ENCODE measurements at regions of chr2 and their contacts with region 1.

Region 1: GRCh38 chr2:208006833-208007232 is 18.5 kb downstream of the PLEKHM3 start:
- DNase-seq: no peak
- ATAC-seq: no peak
- H3K4me3 ChIP-seq: no peak overlapping the region
- H3K4me3 Mint-ChIP-seq: no peak overlapping the region
- H3K27ac ChIP-seq: no peak overlapping the region
- H3K27ac Mint-ChIP-seq: no peak overlapping the region
- H3K4me1 ChIP-seq: peaks cover 0 to 5% of the 10 kb centered on the region in 2 donors
- H3K4me1 Mint-ChIP-seq: peaks cover 16% of the 10 kb centered on the region
- H3K27me3 ChIP-seq: no peaks in the 10 kb centered on the region
- H3K27me3 Mint-ChIP-seq: no peaks in the 10 kb centered on the region
- CTCF ChIP-seq: no peak

Region 2: GRCh38 chr2:208033758-208034502 is 27.1 kb after region 1 on chr2:
- CTCF ChIA-PET with region 1: interaction called, 6 read pairs
- POLR2A ChIA-PET with region 1: interaction called, 13 read pairs
- intact Hi-C with region 1: no loop called
- DNase-seq: peak; percentile 60
- ATAC-seq: peak; percentile 68
- H3K4me3 ChIP-seq: no peak overlapping the region
- H3K4me3 Mint-ChIP-seq: no peak overlapping the region
- H3K27ac ChIP-seq: no peak overlapping the region
- H3K27ac Mint-ChIP-seq: no peak overlapping the region
- H3K4me1 ChIP-seq: no peaks in the 10 kb centered on the region
- H3K4me1 Mint-ChIP-seq: no peaks in the 10 kb centered on the region
- H3K27me3 ChIP-seq: no peaks in the 10 kb centered on the region
- H3K27me3 Mint-ChIP-seq: no peaks in the 10 kb centered on the region
- CTCF ChIP-seq: peak; percentile 55